ENCODE measurements at regions of chr5 and their contacts with region 1.

Region 1: GRCh38 chr5:145834917-145835847 is at the start of gene PRELID2:
- DNase-seq: peak; percentile 56 to 93
- H3K4me3 ChIP-seq: peak within 1 kb of the TSS; percentile 77
- H3K27ac ChIP-seq: peak within 1 kb of the TSS; percentile 82 to 90
- H3K4me1 ChIP-seq: peaks cover 0 to 18% of the 10 kb centered on the region in 2 donors
- H3K27me3 ChIP-seq: no peaks in the 10 kb centered on the region
- CTCF ChIP-seq: no peak
- total RNA-seq, gene PRELID2: 23.5 TPM

Region 2: GRCh38 chr5:144203750-144204596 is 1631.2 kb before region 1 on chr5:
- intact Hi-C with region 1: loop called (anchors 5 kb)
- DNase-seq: peak in 1 of 2 donors; percentile 64
- H3K4me3 ChIP-seq: no peak overlapping the region
- H3K27ac ChIP-seq: no peak overlapping the region
- H3K4me1 ChIP-seq: peaks cover 0 to 4% of the 10 kb centered on the region in 2 donors
- H3K27me3 ChIP-seq: no peaks in the 10 kb centered on the region
- CTCF ChIP-seq: peak; percentile 64 to 83 (median 77)

Region 3: GRCh38 chr5:145936401-145937131 is 101.4 kb after region 1 on chr5 and contains the start of gene SH3RF2:
- intact Hi-C with region 1: loop called (anchors 5 kb)
- DNase-seq: peak in 1 of 2 donors; percentile 82
- H3K4me3 ChIP-seq: peak within 1 kb of the TSS; percentile 65 to 72
- H3K27ac ChIP-seq: peak within 1 kb of the TSS; percentile 58 to 64
- H3K4me1 ChIP-seq: no peaks in the 10 kb centered on the region
- H3K27me3 ChIP-seq: no peaks in the 10 kb centered on the region
- CTCF ChIP-seq: no peak
- total RNA-seq, gene SH3RF2: 50.6 TPM

Measured in ascending aorta (tissue), 2 donors.